H1 (cell line): ENCODE measurements at regions of chr7 and their contacts with region 1.

Region 1: DNA sequence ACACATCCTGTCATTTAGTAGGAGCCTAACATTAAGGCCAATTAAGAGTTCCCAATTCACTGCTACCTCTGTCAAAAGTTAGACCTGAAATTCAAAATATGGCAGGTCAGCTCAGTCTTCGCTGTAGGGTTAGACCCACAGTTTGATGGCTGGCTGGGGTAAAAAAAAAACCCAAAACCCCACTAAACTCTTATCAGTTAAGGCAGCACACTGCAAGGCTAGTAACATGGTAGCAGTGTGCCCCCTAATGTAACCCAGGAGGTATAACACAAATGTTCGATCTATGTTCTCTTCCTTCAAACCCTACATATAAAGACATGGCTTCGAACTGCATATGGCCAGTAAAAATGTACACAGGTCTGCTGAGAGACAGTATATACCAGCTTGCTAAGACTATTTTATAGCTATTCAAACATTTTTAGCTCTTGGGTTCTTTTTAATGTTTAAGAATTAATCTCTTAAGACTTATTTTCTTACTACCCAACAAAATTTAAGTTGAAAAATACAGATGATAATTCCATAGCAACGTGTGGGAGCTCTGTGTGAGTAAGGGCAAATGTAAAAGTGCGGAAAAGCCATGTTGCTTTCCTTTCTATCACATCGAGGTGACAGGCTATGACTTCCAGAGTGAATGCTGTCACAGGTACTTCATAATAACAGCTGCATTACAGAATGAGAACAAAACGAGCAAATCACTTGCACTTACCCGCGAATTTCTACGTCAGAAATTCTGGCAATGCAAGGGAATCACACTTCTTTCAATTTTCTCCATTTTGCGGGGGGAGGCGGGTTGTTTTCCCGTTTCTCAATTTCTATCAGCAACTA is 168.4 kb upstream of the IMMP2L start:
- DNase-seq: no peak
- H3K4me3 ChIP-seq: no peak overlapping the region
- H3K27ac ChIP-seq: no peak overlapping the region
- H3K4me1 ChIP-seq: no peaks in the 10 kb centered on the region
- H3K27me3 ChIP-seq: no peaks in the 10 kb centered on the region
- CTCF ChIP-seq: peak in 2 of 3 experiments; percentile 68 to 73; a peak in 3 of 4 replicates
- EP300 ChIP-seq: no peak
- POLR2A ChIP-seq: no peak
- RAD21 ChIP-seq: peak; percentile 88 to 90

Region 2: DNA sequence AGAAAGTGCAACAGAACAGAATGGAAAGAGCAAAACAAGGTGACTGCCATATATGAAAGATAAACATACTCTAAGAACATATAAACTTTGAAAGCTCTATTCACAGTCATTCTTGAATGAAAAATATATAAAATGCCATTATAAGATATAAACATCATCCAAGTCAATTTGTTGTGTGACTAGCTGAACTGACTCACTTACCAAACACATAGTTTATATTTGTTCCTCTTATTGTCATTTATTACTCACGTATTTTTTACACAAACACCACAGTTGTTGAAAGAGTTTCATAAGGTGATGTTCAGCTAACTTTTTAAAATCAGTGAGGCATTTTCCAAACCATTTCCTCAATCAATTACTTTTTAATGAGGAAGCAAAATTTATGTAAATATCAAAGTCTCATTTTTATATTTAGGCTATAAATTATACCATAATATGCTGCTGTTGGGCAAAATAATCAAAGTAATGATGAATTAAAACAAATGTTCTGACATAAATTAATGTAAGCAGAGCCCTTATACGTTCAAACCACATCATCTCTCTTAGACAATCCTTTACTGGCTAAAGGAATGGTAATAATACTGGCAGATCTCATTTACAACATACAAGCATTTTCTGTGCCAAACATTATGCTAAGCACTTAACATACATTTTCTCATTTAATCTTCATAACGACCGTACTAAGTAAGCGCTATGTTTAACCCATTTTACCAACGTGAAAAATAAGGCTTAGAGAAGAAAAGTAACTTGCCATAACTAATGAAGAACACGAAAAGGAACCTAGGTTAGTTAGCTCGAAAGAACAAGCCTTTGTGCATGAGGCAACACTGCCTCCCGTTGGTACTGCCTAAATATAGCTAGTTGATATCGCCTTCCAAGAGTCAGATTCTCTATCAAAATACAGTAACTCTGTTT is 632.4 kb before region 1 on chr7:
- CTCF ChIA-PET with region 1: interaction called, 11 read pairs
- POLR2A ChIA-PET with region 1: no interaction called
- DNase-seq: no peak
- H3K4me3 ChIP-seq: no peak overlapping the region; a peak in 1 of 8 replicates
- H3K27ac ChIP-seq: no peak overlapping the region
- H3K4me1 ChIP-seq: peaks cover 0 to 17% (median 5%) of the 10 kb centered on the region in 4 experiments; a peak in 5 of 7 replicates
- H3K27me3 ChIP-seq: no peaks in the 10 kb centered on the region
- CTCF ChIP-seq: peak in 2 of 3 experiments; percentile 69 to 88; a peak in 3 of 4 replicates
- EP300 ChIP-seq: no peak
- POLR2A ChIP-seq: no peak
- RAD21 ChIP-seq: peak; percentile 94 to 95

Region 3: GRCh38 chr7:111639934-111640333 is 90.8 kb before region 1 on chr7:
- CTCF ChIA-PET with region 1: interaction called, 13 read pairs
- POLR2A ChIA-PET with region 1: no interaction called
- DNase-seq: no peak
- H3K4me3 ChIP-seq: no peak overlapping the region
- H3K27ac ChIP-seq: no peak overlapping the region
- H3K4me1 ChIP-seq: no peaks in the 10 kb centered on the region
- H3K27me3 ChIP-seq: peaks cover 8 to 34% (median 30%) of the 10 kb centered on the region in 4 experiments
- CTCF ChIP-seq: no peak
- EP300 ChIP-seq: no peak
- POLR2A ChIP-seq: no peak
- RAD21 ChIP-seq: no peak

Region 4: GRCh38 chr7:111662386-111662785 is 68.3 kb before region 1 on chr7:
- CTCF ChIA-PET with region 1: interaction called, 14 read pairs
- POLR2A ChIA-PET with region 1: no interaction called
- DNase-seq: no peak
- H3K4me3 ChIP-seq: no peak overlapping the region
- H3K27ac ChIP-seq: no peak overlapping the region
- H3K4me1 ChIP-seq: no peaks in the 10 kb centered on the region
- H3K27me3 ChIP-seq: no peaks in the 10 kb centered on the region
- CTCF ChIP-seq: no peak
- EP300 ChIP-seq: no peak
- POLR2A ChIP-seq: no peak
- RAD21 ChIP-seq: no peak

Region 5: GRCh38 chr7:111711426-111712065 is 19.1 kb before region 1 on chr7:
- CTCF ChIA-PET with region 1: interaction called, 37 read pairs
- POLR2A ChIA-PET with region 1: no interaction called
- DNase-seq: no peak
- H3K4me3 ChIP-seq: no peak overlapping the region
- H3K27ac ChIP-seq: no peak overlapping the region
- H3K4me1 ChIP-seq: no peaks in the 10 kb centered on the region
- H3K27me3 ChIP-seq: peaks cover 0 to 1% (median 0%) of the 10 kb centered on the region in 4 experiments; a peak in 1 of 7 replicates
- CTCF ChIP-seq: no peak
- EP300 ChIP-seq: no peak
- POLR2A ChIP-seq: no peak
- RAD21 ChIP-seq: no peak

Region 6: DNA sequence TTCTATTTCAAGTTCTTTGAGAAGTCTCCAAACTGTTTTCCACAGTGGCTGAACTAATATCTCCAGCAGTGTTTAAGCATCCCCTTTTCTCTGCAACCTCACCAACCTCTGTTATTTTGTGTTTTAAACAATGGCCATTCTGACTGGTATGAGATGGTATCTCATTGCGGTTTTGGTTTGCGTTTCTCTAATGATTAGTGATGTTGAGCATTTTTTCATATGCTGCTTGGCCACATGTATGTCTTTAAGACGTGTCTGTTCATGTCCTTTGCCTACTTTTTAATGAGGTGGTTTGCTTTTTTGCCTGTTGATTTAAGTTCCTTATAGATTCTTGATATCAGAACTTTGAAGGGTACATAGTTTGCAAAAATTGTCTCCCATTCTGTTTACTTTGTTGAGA is 11.8 kb before region 1 on chr7:
- CTCF ChIA-PET with region 1: interaction called, 37 read pairs
- POLR2A ChIA-PET with region 1: no interaction called
- DNase-seq: no peak
- H3K4me3 ChIP-seq: no peak overlapping the region
- H3K27ac ChIP-seq: no peak overlapping the region
- H3K4me1 ChIP-seq: no peaks in the 10 kb centered on the region
- H3K27me3 ChIP-seq: no peaks in the 10 kb centered on the region
- CTCF ChIP-seq: no peak
- EP300 ChIP-seq: no peak
- POLR2A ChIP-seq: no peak
- RAD21 ChIP-seq: no peak

Region 7: DNA sequence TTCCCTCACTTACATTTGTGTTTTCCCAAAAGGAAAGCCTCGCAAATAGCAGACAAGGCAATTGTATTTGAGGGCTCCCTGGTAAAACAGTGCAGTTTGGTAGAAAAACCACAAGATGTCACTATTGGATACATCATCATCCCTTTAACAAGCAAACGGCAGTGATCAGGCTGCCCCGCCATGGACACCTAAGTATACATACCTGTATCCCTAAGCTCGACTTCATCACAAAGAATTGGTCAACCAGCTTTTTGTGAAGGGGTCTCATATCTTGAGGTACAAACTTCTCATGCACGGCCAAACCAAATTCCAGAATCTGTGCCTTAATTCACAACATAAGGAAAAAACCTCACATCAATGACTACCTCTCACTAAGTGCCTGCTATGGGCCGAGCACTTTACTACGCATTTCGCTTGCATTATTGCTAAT is 11.1 kb after region 1 on chr7:
- CTCF ChIA-PET with region 1: interaction called, 31 read pairs
- POLR2A ChIA-PET with region 1: no interaction called
- DNase-seq: no peak
- H3K4me3 ChIP-seq: no peak overlapping the region
- H3K27ac ChIP-seq: no peak overlapping the region
- H3K4me1 ChIP-seq: peaks cover 0 to 9% (median 0%) of the 10 kb centered on the region in 4 experiments; a peak in 1 of 7 replicates
- H3K27me3 ChIP-seq: no peaks in the 10 kb centered on the region
- CTCF ChIP-seq: peak in 2 of 3 experiments; percentile 79 to 87; a peak in 3 of 4 replicates
- EP300 ChIP-seq: no peak
- POLR2A ChIP-seq: no peak
- RAD21 ChIP-seq: peak; percentile 86 to 91